H1 (cell line): ENCODE measurements at regions of chr16 and their contacts with region 1.

Region 1: DNA sequence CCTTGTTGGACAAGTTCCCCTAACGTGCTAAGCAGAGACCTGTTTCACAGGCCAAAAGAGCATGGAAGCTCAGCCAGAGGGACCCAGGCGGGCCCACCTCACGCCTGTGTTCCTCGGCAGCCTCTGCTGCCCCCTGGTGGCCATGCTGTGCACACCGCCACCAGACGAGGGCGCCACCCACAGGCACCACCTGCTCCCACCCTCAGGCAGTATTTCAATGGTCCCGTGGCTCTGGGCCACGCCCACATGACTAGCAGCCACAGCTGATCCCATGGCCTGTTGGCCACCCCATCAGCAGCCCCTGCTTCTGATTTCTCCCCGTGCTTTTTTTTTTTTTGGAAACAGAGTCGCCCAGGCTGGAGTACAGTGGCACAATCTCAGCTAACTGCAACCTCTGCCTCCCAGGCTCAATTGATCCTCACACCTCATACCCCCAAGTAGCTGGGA is 18.9 kb downstream of the MPG start:
- DNase-seq: peak; percentile 84 to 97
- H3K4me3 ChIP-seq: no peak overlapping the region
- H3K27ac ChIP-seq: no peak overlapping the region
- H3K4me1 ChIP-seq: no peaks in the 10 kb centered on the region
- H3K27me3 ChIP-seq: no peaks in the 10 kb centered on the region; a peak in 1 of 7 replicates
- CTCF ChIP-seq: peak; percentile 100
- EP300 ChIP-seq: no peak
- POLR2A ChIP-seq: no peak
- RAD21 ChIP-seq: peak; percentile 90 to 92

Region 2: DNA sequence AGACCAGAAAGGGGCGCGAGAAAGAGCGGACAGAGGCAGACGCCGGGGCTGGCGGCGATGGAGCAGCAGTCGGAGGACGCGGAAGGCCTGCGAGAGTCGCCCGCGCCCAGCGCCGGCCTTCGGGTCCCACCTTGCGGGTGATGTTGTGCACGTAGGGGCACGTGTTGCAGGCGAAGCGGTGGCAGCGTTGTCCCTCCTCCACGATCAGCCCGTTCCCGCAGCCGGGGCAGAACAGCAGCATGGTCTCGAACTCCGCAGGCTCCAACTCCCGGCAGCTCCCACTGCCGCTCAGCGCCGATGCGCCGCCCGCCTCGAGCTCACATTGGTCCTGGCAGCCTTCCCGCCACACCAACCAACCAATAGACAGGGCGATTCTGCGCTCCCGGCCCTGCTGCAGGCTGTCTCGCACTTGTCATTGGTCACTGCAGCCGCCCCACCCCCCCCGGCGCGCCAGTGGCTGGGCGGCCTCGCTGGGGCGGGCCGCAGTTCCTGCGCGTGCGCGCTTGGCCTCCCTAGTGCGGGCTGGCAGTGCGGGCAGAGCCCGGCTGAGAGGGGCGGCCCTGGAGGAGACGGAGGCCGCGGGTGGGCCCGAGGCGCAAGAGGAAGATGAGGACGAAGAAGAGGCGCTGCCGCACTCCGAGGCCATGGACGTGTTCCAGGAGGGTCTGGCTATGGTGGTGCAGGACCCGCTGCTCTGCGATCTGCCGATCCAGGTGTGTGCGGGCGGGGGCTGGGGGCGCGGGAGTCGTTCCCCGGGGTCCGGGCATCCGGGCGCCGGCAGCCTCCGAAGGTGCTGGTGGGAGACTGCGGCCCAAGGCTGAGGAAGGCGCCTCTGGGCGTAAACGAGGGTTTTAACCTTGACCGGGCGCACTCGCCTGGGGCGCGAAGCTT is 43.4 kb before region 1 on chr16 and contains the starts of genes POLR3K and SNRNP25:
- CTCF ChIA-PET with region 1: interaction called, 856 read pairs
- POLR2A ChIA-PET with region 1: interaction called, 12 read pairs
- DNase-seq: peak; percentile 92 to 97
- H3K4me3 ChIP-seq: peak within 1 kb of the TSS; percentile 79 to 95 (median 86)
- H3K27ac ChIP-seq: peak within 1 kb of the TSS; percentile 79
- H3K4me1 ChIP-seq: no peaks in the 10 kb centered on the region
- H3K27me3 ChIP-seq: no peaks in the 10 kb centered on the region
- CTCF ChIP-seq: no peak
- EP300 ChIP-seq: no peak
- POLR2A ChIP-seq: peak; percentile 66 to 93
- RAD21 ChIP-seq: no peak
- total RNA-seq, gene POLR3K: 45.4 and 49.6 TPM in 2 replicates
- total RNA-seq, gene SNRNP25: 49.6 and 58.4 TPM in 2 replicates

Region 3: GRCh38 chr16:77807-78443 is 19.0 kb before region 1 on chr16 and contains the start of gene MPG:
- CTCF ChIA-PET with region 1: interaction called, 856 read pairs
- POLR2A ChIA-PET with region 1: interaction called, 153 read pairs
- DNase-seq: peak in 1 of 2 experiments; percentile 87
- H3K4me3 ChIP-seq: peak within 1 kb of the TSS; percentile 54 to 78 (median 68)
- H3K27ac ChIP-seq: no peak within 1 kb of the TSS
- H3K4me1 ChIP-seq: peaks cover 6 to 60% (median 41%) of the 10 kb centered on the region in 4 experiments
- H3K27me3 ChIP-seq: peaks cover 0 to 4% (median 3%) of the 10 kb centered on the region in 4 experiments; a peak in 3 of 7 replicates
- CTCF ChIP-seq: no peak
- EP300 ChIP-seq: no peak
- POLR2A ChIP-seq: no peak; a peak in 1 of 3 replicates
- RAD21 ChIP-seq: no peak
- total RNA-seq, gene MPG: 35.8 and 37.6 TPM in 2 replicates

Region 4: DNA sequence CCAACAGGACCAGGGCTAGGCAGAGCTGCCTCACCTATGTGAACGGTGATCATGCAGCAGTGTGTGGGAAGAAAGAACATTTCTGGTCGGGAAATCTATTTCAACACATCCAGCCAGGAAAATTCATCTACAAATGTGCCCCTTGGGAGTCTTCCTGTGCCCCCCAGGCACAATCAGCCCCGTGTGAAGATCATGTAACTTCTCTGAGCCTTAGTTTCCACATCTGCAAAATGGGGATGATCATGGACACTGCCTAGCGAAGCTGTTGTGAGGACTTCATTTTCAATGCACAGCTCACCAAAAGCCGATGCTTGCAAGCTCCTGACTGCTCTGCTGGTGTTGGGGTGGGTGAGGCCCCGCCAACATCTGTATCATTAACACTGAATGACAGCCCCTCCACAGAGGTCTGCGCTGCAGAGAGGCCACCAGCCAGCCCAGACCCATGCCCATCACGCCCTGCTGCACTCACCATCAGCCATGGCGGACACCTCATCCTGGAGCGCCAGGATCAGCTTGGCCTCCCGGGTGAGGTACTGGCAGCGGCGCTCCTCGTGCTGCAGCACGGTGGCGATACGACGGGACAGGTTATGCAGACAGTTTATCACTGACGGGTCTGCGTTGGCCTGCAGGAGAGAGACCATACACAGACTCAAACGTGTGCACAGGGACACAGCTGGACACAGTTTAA is 15.3 kb after region 1 on chr16:
- CTCF ChIA-PET with region 1: interaction called, 80 read pairs
- POLR2A ChIA-PET with region 1: interaction called, 6 read pairs
- DNase-seq: no peak
- H3K4me3 ChIP-seq: no peak overlapping the region
- H3K27ac ChIP-seq: no peak overlapping the region
- H3K4me1 ChIP-seq: peaks cover 0 to under 1% (median 0%) of the 10 kb centered on the region in 4 experiments; a peak in 2 of 7 replicates
- H3K27me3 ChIP-seq: no peaks in the 10 kb centered on the region
- CTCF ChIP-seq: no peak
- EP300 ChIP-seq: no peak
- POLR2A ChIP-seq: no peak
- RAD21 ChIP-seq: no peak

Region 5: GRCh38 chr16:249431-249830 is 152.5 kb after region 1 on chr16:
- CTCF ChIA-PET with region 1: no interaction called
- POLR2A ChIA-PET with region 1: no interaction called
- DNase-seq: no peak
- H3K4me3 ChIP-seq: no peak overlapping the region
- H3K27ac ChIP-seq: no peak overlapping the region
- H3K4me1 ChIP-seq: no peaks in the 10 kb centered on the region
- H3K27me3 ChIP-seq: no peaks in the 10 kb centered on the region
- CTCF ChIP-seq: no peak
- EP300 ChIP-seq: no peak
- POLR2A ChIP-seq: no peak
- RAD21 ChIP-seq: no peak

Region 6: GRCh38 chr16:361872-362701 is 265.1 kb after region 1 on chr16:
- CTCF ChIA-PET with region 1: interaction called, 13 read pairs
- POLR2A ChIA-PET with region 1: no interaction called
- DNase-seq: peak; percentile 58 to 85
- H3K4me3 ChIP-seq: no peak overlapping the region
- H3K27ac ChIP-seq: no peak overlapping the region
- H3K4me1 ChIP-seq: no peaks in the 10 kb centered on the region; a peak in 2 of 7 replicates
- H3K27me3 ChIP-seq: no peaks in the 10 kb centered on the region
- CTCF ChIP-seq: peak; percentile 91 to 96 (median 92)
- EP300 ChIP-seq: no peak
- POLR2A ChIP-seq: no peak
- RAD21 ChIP-seq: peak; percentile 94 to 96